Aorta (tissue), 5 donors: ENCODE measurements at regions of chr20 and their contacts with region 1.

Region 1: DNA sequence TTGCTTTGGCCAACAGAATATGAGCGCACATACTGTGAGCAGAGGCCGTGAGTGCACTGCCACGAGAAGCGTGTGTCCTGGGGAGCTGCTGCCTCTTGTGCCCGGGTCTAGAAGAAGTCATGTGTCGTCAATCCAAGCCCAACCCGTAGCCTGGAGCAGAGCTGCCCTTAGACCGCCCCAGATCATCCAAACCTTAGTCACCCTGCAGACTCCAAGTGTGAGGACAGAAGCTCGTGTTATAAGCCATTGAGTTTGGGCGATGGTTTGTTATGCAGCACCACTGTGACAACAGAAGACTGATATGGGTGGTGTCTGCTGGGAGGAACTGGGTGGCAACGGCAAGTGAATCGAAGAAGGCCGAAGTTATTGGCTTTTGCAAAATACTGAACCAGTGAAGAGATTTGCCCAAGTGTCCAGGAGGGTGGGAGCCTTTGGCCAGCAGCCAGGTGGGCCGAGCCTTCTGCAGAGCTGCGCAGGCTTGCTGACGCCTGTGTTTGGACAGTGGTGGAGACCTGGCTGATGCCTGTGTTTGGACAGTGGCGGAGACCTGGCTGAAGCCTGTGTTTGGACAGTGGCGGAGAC is 101.3 kb upstream of the SULF2 start:
- DNase-seq: no peak
- ATAC-seq: no peak
- H3K4me3 ChIP-seq: no peak overlapping the region
- H3K27ac ChIP-seq: no peak overlapping the region
- H3K4me1 ChIP-seq: no peaks in the 10 kb centered on the region
- H3K27me3 ChIP-seq: no peaks in the 10 kb centered on the region

Region 2: GRCh38 chr20:47839200-47839599 is 47.4 kb before region 1 on chr20:
- intact Hi-C with region 1: loop called in 1 of 2 experiments (anchors 10 kb)
- DNase-seq: no peak
- ATAC-seq: peak; percentile 26
- H3K4me3 ChIP-seq: no peak overlapping the region
- H3K27ac ChIP-seq: no peak overlapping the region
- H3K4me1 ChIP-seq: no peaks in the 10 kb centered on the region
- H3K27me3 ChIP-seq: no peaks in the 10 kb centered on the region

Region 3: DNA sequence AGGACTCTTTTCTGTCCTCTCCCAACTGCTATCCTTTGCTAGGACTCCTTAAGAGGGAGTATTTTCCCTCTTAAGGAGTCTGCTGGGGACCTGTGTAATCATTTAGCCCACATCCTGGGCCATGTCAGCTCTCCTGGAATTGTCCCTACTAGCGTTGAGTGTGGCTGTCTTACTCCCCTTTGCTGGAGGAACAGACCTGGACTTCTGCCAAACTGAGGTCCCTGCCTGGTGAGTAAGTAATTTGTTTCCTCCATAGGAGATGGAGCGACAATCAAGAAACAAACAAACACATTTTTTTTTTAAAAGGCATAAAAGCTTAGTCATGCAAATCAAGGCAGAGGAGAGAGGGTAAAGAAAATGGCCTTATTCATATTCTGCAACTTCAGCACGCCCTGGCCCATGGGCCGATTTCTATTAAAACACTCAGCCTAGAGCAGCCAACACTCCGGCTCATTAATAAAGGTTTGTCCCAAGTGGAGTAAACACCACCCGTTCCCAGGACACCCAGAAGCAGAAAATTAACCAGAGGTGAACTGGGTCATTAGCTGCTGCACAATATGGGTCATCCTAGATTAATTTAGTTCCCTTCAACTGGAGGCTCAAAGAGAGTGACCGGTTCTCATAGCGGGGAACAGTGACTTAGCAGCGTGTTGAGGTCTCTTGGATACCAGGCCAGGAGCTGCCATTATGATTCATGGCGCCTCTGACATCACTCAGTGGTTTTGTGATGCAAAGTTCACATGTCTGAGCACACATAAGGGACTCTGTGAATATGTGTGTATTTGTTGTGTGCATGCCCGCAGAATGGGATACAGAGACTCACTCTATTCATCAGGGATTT is 63.7 kb after region 1 on chr20:
- intact Hi-C with region 1: no loop called
- DNase-seq: no peak
- ATAC-seq: no peak
- H3K4me3 ChIP-seq: no peak overlapping the region
- H3K27ac ChIP-seq: no peak overlapping the region
- H3K4me1 ChIP-seq: no peaks in the 10 kb centered on the region
- H3K27me3 ChIP-seq: no peaks in the 10 kb centered on the region

Region 4: DNA sequence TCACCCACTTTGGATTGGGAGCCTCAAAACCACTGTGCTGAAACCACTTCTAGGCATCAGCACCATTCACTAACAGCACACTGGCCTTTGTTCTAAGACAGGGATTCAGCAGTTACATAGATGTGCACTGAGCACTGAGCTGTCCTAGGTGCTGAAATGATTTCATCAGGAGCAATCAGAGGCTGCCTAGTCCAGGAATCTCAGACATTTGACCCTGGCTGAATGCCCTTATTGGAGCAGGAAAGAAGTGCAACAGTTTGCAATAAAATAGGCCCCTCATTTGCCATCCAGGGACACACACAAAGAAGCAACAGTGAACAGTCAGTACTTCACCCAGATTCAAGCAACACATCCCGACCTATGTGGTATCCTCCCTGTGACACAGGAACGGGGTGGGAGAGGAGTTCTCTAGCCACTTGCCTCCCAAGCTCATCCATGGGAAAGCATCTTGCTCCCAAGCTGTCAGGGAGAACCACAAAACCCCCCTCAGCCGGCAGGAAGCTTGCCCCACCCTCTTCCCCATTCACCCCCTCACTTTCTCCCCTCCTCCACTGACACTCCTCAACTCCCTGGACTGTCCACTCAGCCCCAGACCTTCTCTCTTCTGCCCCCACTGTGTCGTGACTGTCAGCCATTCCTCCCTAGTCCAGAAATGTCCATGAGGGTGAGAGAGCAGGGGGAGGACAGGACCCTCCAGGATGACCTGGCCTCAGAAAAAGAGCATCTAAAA is 636.8 kb after region 1 on chr20:
- intact Hi-C with region 1: loop called in 1 of 2 experiments (anchors 5 kb)
- DNase-seq: no peak
- ATAC-seq: no peak
- H3K4me3 ChIP-seq: no peak overlapping the region
- H3K27ac ChIP-seq: no peak overlapping the region
- H3K4me1 ChIP-seq: no peaks in the 10 kb centered on the region
- H3K27me3 ChIP-seq: no peaks in the 10 kb centered on the region